Dendritic cell treated with granulocyte-macrophage colony-stimulating factor and Interleukin-4, amounts not matched to agents 40 ng/mL and 50 ng/mL, for 4 days (primary cell): ENCODE measurements at regions of chr12 and their contacts with region 1.

Region 1: DNA sequence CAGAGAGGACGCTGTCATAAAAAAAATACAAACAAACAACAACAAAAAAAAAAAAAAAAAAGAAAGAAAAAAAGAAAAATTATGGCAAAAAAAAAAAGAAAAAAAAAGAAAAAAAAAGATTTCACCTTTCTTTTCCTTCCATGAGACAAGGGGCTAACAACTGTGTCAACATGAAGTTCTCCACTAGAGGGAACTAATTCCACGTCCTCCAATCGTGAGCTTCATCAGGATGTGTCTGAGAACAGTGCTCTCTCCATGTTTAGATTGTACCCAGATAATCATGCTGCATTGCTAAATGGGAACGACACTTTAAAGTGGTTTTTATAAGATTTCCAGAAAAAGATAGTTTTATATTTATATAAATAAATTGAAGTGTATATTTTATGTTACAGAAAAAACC is 96.2 kb upstream of the PTPRB start:
- H3K4me3 Mint-ChIP-seq: no peak overlapping the region
- H3K27ac Mint-ChIP-seq: no peak overlapping the region
- H3K4me1 Mint-ChIP-seq: no peaks in the 10 kb centered on the region
- H3K27me3 Mint-ChIP-seq: no peaks in the 10 kb centered on the region

Region 2: GRCh38 chr12:70255311-70255710 is 478.1 kb before region 1 on chr12:
- intact Hi-C with region 1: no loop called
- H3K4me3 Mint-ChIP-seq: no peak overlapping the region
- H3K27ac Mint-ChIP-seq: no peak overlapping the region
- H3K4me1 Mint-ChIP-seq: peaks cover 26% of the 10 kb centered on the region
- H3K27me3 Mint-ChIP-seq: no peaks in the 10 kb centered on the region

Region 3: DNA sequence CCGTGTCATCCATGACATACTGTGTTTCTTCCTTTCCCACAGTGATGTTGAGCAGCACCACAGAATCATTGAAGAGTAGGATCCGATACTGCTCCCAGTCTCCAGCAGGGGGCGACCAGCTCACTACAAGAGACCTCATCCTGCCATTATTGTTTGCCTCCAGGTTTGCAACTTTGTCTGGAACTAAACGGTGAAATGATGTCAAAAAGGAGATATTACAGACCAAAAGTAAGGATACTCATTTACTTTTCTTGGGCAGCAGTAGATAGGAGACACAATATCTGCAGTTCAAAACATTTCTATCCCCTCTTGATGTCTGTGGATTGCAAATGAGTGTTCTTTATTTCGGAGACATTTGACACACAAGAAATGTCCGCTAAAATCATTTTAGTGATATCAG is 143.3 kb before region 1 on chr12:
- intact Hi-C with region 1: loop called (anchors 5 kb)
- H3K4me3 Mint-ChIP-seq: no peak overlapping the region
- H3K27ac Mint-ChIP-seq: no peak overlapping the region
- H3K4me1 Mint-ChIP-seq: no peaks in the 10 kb centered on the region
- H3K27me3 Mint-ChIP-seq: no peaks in the 10 kb centered on the region

Region 4: DNA sequence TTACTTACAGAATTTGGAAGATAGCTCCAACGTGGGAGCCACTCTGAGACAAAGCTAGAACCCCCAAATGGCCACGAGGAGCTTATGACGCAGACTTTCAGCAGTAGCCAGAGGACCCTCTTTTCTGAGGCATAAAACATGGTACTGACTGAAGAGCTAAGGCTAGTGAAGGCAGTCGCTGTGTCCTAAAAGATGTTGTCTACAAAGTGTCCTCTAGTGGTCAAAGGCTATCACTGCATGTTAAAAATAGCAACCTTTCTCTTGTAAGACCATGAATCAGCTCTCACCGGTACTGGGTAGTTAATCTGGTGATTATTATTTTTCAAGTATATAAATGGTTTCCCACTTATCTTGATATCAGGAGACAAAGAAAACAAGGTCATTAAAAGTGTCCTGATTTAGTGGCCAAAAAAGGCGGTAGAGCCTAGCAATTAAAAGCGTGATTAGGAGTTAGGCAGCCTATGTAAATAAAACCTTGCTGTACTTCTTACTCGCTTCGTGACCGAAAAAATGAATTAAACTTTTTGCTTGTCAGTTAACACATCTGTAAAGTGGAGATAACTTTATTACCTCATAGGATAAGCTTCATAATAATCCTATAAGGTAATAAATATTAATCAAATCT is 659.2 kb after region 1 on chr12:
- intact Hi-C with region 1: loop called (anchors 10 kb)
- H3K4me3 Mint-ChIP-seq: no peak overlapping the region
- H3K27ac Mint-ChIP-seq: no peak overlapping the region
- H3K4me1 Mint-ChIP-seq: no peaks in the 10 kb centered on the region
- H3K27me3 Mint-ChIP-seq: no peaks in the 10 kb centered on the region